HepG2 (cell line): ENCODE measurements at regions of chr2 and their contacts with region 1.

Region 1: GRCh38 chr2:218745559-218746469 is 35.2 kb downstream of the TTLL4 start:
- DNase-seq: peak; percentile 99
- ATAC-seq: peak; percentile 98
- H3K4me3 ChIP-seq: peak overlapping the region in 1 of 3 experiments; percentile 12; a peak in 2 of 6 replicates
- H3K27ac ChIP-seq: peak overlapping the region; percentile 95
- H3K4me1 ChIP-seq: peaks cover 67% of the 10 kb centered on the region
- H3K27me3 ChIP-seq: no peaks in the 10 kb centered on the region
- CTCF ChIP-seq: 0 out of 2 replicates have a peak, but pooled peaks have one; percentile 9
- EP300 ChIP-seq: peak; percentile 25 to 82; a peak in 3 of 4 replicates
- POLR2A ChIP-seq: peak in 1 of 2 experiments; percentile 47; a peak in 2 of 4 replicates
- RAD21 ChIP-seq: no peak; the same call in 1 of the 2 replicates

Region 2: DNA sequence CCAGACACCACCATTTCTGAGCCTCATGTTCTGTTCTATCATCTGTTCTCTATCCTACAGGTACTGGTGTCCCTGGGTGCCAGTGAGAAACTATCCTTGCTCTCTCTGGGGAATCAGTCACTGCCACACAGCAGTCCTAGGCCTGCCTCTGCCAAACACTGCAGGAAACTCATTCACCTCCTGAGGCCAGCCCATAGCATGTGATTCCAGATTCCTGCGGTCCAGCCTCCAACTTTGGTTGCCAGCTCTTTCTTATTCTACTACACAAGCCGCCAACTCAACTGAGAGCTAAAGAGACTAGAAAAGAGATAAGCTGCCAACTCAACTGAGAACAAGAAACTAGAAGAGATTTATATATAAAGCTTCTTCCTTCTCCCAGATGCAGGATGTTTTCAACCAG is 44.0 kb before region 1 on chr2:
- CTCF ChIA-PET with region 1: no interaction called
- POLR2A ChIA-PET with region 1: no interaction called
- in situ Hi-C with region 1: no loop called
- intact Hi-C with region 1: no loop called
- DNase-seq: no peak
- ATAC-seq: no peak
- H3K4me3 ChIP-seq: no peak overlapping the region
- H3K27ac ChIP-seq: no peak overlapping the region
- H3K4me1 ChIP-seq: peaks cover 8% of the 10 kb centered on the region; the same call in 1 of the 2 replicates
- H3K27me3 ChIP-seq: no peaks in the 10 kb centered on the region
- CTCF ChIP-seq: no peak
- EP300 ChIP-seq: no peak
- POLR2A ChIP-seq: no peak
- RAD21 ChIP-seq: no peak

Region 3: GRCh38 chr2:218727502-218728165 is 18.2 kb before region 1 on chr2:
- CTCF ChIA-PET with region 1: interaction called, 10 read pairs
- POLR2A ChIA-PET with region 1: interaction called, 104 read pairs
- in situ Hi-C with region 1: no loop called
- intact Hi-C with region 1: loop called (anchors 1 kb)
- DNase-seq: peak; percentile 66
- ATAC-seq: no peak
- H3K4me3 ChIP-seq: no peak overlapping the region
- H3K27ac ChIP-seq: no peak overlapping the region
- H3K4me1 ChIP-seq: peaks cover 44% of the 10 kb centered on the region
- H3K27me3 ChIP-seq: no peaks in the 10 kb centered on the region
- CTCF ChIP-seq: peak; percentile 77
- EP300 ChIP-seq: no peak
- POLR2A ChIP-seq: no peak
- RAD21 ChIP-seq: peak; percentile 77

Region 4: DNA sequence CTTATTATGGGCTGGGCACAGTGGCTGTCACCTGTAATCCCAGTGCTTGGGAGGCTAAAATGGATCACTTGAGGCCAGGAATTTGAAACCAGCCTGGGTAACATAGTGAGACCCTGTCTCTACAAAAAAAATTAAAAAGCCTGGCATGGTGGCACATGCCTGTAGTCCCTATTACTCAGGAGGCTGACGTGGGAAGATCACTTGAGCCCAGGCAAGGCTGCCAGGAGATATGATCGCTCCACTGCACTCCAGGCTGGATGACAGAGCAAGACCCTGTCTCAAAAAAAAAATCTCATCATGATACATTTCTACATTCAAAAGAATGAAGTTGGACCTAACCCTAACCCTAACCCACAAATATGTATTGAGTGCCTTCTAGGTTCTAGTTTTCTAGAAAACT is 16.0 kb after region 1 on chr2:
- CTCF ChIA-PET with region 1: no interaction called
- POLR2A ChIA-PET with region 1: interaction called, 139 read pairs
- in situ Hi-C with region 1: no loop called
- intact Hi-C with region 1: no loop called
- DNase-seq: no peak
- ATAC-seq: no peak
- H3K4me3 ChIP-seq: no peak overlapping the region
- H3K27ac ChIP-seq: no peak overlapping the region
- H3K4me1 ChIP-seq: peaks cover 79% of the 10 kb centered on the region
- H3K27me3 ChIP-seq: no peaks in the 10 kb centered on the region
- CTCF ChIP-seq: no peak
- EP300 ChIP-seq: no peak
- POLR2A ChIP-seq: no peak
- RAD21 ChIP-seq: no peak

Region 5: GRCh38 chr2:218898109-218898878 is 152.5 kb after region 1 on chr2:
- CTCF ChIA-PET with region 1: no interaction called
- POLR2A ChIA-PET with region 1: no interaction called
- in situ Hi-C with region 1: no loop called
- intact Hi-C with region 1: no loop called
- DNase-seq: peak; percentile 33
- ATAC-seq: peak; percentile 84
- H3K4me3 ChIP-seq: peak overlapping the region in 2 of 3 experiments; percentile 13 to 51; a peak in 2 of 6 replicates
- H3K27ac ChIP-seq: no peak overlapping the region
- H3K4me1 ChIP-seq: peaks cover 48% of the 10 kb centered on the region
- H3K27me3 ChIP-seq: peaks cover 24 to 73% of the 10 kb centered on the region in 2 experiments; a peak in 4 of 5 replicates
- CTCF ChIP-seq: peak; percentile 100
- EP300 ChIP-seq: no peak
- POLR2A ChIP-seq: no peak
- RAD21 ChIP-seq: peak; percentile 93